ENCODE measurements at regions of chr2 and their contacts with region 1.

Region 1: GRCh38 chr2:216687646-216688045 is 7.7 kb downstream of the IGFBP5 start:
- DNase-seq: peak; percentile 39
- ATAC-seq: no peak
- H3K4me3 ChIP-seq: no peak overlapping the region
- H3K27ac ChIP-seq: no peak overlapping the region
- H3K4me1 ChIP-seq: peaks cover 2% of the 10 kb centered on the region
- H3K27me3 ChIP-seq: peaks cover 13% of the 10 kb centered on the region
- CTCF ChIP-seq: peak; percentile 29

Region 2: GRCh38 chr2:217510771-217511291 is 823.2 kb after region 1 on chr2:
- intact Hi-C with region 1: loop called (anchors 10 kb)
- DNase-seq: no peak
- ATAC-seq: peak; percentile 94
- H3K4me3 ChIP-seq: no peak overlapping the region
- H3K27ac ChIP-seq: no peak overlapping the region
- H3K4me1 ChIP-seq: peaks cover 17% of the 10 kb centered on the region
- H3K27me3 ChIP-seq: no peaks in the 10 kb centered on the region
- CTCF ChIP-seq: peak; percentile 62

Region 3: GRCh38 chr2:217713395-217714286 is 1026.0 kb after region 1 on chr2:
- intact Hi-C with region 1: loop called (anchors 10 kb)
- DNase-seq: peak; percentile 85
- ATAC-seq: peak; percentile 93
- H3K4me3 ChIP-seq: no peak overlapping the region
- H3K27ac ChIP-seq: peak overlapping the region; percentile 30
- H3K4me1 ChIP-seq: peaks cover 11% of the 10 kb centered on the region
- H3K27me3 ChIP-seq: no peaks in the 10 kb centered on the region
- CTCF ChIP-seq: peak; percentile 97

Measured in upper lobe of right lung (tissue), 1 donor.